Gastrocnemius medialis (tissue), 4 donors: ENCODE measurements at regions of chr3 and their contacts with region 1.

Region 1: DNA sequence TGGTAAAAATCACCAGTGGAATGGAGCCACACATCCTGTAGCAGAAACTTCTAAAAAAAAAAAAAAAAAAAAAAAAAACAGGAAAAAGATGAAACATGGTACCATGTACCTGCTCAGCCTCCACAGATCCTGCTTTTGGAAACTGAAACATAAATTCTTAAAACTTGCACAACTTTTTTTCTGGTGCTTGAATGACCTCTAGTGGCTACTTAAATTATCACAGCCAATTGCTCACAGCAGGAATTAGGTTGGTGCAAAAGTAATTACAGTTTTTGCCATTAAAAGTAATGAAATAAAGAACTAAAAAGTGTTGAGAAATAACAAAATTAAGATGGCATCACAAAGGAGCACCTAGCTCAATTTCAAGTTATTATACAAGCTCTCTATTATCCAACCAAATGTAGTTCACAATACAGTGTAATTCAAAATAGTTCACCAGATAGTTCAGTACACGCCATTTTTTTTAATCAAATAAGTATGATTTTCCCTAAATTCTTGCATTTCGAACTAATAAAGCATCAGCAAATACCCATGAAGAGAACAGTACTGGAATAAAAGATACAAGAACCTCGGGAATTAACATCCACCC is 80.6 kb downstream of the ULK4 start:
- DNase-seq: no peak
- ATAC-seq: no peak
- H3K4me3 ChIP-seq: no peak overlapping the region
- H3K27ac ChIP-seq: no peak overlapping the region
- H3K4me1 ChIP-seq: no peaks in the 10 kb centered on the region
- H3K27me3 ChIP-seq: no peaks in the 10 kb centered on the region
- CTCF ChIP-seq: peak; percentile 52 to 73 (median 67)
- POLR2A ChIP-seq: no peak

Region 2: DNA sequence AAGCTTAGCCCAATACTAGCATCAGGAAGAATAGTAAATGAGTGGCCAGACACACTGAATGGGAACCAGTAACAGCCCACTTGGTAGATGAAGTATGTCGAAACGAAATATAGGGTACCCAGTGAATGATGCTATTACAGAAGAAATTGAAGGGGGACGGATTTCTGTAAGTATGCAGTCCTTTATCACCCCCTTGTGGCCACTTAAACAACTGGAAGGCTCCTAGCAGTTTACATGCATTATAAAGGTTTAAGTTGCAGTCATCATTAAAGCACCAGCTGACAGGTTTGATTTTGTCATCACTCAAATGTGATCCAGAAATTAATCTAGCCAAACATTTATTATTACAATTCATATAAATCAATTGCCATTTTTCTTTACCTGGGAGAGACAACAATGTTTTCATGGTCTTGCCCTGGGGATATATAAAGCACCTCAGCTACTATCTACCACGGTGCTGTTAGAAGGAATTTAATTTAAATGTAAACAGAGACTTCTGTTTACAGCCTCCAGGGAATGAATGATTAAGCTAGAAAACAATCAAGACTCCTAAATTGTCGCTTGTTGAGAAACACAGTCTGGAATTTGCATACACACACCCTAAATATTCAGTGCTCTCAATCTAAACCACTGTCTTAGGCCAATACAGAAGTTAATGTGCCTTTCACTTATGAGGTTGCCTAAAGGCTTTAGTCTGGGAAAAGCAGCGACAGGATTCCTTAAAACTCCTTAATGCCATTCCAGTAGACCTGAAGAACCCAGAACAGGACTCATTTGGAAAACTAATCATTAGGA is 1564.1 kb before region 1 on chr3:
- in situ Hi-C with region 1: loop called in 1 of 4 experiments (anchors 10 kb)
- intact Hi-C with region 1: no loop called
- DNase-seq: no peak
- ATAC-seq: peak; percentile 37 to 49
- H3K4me3 ChIP-seq: no peak overlapping the region
- H3K27ac ChIP-seq: no peak overlapping the region
- H3K4me1 ChIP-seq: peaks cover 21 to 23% of the 10 kb centered on the region in 2 donors
- H3K27me3 ChIP-seq: no peaks in the 10 kb centered on the region
- CTCF ChIP-seq: peak; percentile 68 to 82 (median 75)
- POLR2A ChIP-seq: no peak

Region 3: DNA sequence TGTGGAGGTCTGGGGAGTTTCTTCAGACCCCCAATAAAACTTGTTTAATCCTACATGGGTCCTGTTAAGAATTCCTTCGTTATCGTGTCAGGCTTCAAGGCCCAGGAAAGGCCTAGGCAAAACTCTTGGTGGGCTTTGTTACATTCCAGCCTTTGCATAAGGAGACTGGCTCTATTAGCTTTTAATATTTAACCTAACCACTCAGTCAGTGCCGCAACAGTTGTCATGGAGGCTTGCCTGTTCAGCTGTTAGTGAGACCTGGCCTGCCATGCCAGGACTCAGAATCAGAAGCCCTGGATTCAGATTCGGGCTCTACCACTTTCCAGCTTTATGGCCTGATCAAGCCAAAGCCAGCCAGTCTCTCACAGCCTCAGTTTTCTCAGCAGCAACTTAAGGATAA is 1552.3 kb before region 1 on chr3:
- in situ Hi-C with region 1: loop called (anchors 5 to 25 kb)
- intact Hi-C with region 1: loop called (anchors 1 kb)
- DNase-seq: no peak
- ATAC-seq: no peak
- H3K4me3 ChIP-seq: no peak overlapping the region
- H3K27ac ChIP-seq: no peak overlapping the region
- H3K4me1 ChIP-seq: peaks cover 5 to 8% of the 10 kb centered on the region in 2 donors
- H3K27me3 ChIP-seq: no peaks in the 10 kb centered on the region
- CTCF ChIP-seq: no peak
- POLR2A ChIP-seq: no peak

Region 4: DNA sequence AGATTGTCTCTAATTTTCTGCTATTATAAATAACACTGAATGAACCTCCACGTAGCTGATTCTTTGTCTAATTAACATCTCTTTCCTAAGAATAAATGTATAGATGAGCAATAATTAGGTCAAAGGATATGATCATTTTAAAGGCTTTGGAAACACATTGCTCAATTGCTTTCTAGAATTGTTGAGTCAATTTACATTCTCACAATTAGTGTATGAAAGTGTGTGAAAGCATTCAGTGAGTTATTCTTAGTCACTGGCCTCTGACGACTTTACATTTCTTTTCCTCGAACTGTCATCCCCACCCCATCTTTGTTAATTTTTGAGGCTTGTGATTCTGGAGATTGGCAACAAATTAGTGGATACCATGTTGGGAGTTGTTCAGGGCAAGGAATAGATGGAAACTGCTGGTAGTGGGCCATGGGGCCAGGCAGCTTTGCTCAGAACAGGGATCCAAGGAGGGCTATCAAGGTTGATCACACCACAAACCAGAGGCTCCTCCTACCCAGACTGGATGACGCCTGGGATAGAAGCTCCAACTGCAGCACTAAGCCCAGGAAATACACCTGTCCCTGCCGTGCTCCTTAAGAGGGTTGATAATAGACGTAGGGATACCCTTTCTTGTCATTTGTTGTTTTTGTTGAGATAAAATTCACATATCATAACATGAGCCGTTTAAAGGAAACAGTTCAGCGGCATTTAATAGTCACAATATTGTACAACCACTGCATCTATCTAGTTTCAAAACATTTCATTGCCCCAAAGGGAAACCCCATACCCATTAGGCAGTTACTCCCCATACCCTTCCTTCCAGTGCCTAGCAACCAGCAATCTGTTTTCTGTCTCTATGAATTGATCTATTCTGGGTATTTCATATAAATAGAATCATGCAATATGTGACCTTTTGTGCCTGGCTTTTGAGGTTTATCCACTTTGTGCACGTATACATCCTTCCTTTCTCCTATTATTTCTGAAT is 1543.9 kb before region 1 on chr3:
- in situ Hi-C with region 1: loop called in 2 of 4 experiments (anchors 25 kb)
- intact Hi-C with region 1: no loop called
- DNase-seq: no peak
- ATAC-seq: no peak
- H3K4me3 ChIP-seq: no peak overlapping the region
- H3K27ac ChIP-seq: no peak overlapping the region
- H3K4me1 ChIP-seq: peaks cover 5 to 8% of the 10 kb centered on the region in 2 donors
- H3K27me3 ChIP-seq: no peaks in the 10 kb centered on the region
- CTCF ChIP-seq: no peak
- POLR2A ChIP-seq: no peak

Region 5: DNA sequence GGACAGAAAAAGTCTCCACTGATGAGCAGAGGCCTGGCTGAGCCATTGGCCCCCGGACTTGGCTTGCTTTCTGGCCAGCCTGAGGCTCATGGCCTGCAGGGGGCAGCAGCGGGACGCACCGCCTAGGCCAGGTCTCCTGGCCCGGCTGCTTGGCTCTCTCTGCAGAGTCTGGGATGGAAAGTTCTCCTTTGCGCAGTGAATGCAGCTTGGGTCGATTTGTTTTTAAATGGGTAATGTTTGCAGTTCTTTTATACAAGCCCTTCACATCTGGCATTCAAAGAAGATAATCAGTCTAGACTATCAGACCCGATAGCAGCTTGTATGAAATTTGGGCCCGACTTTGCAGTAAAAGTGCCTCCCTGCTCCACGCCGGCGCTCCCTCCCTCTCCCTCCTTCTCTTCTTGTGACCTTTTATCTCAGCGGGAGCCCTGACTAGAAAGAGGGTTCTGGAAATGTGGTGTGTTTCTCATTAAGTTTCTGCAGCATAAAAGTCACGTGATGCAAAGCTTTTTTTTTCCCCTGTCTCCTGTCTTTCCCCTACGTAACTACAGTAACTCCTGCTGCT is 1296.6 kb before region 1 on chr3:
- in situ Hi-C with region 1: loop called (anchors 5 to 10 kb)
- intact Hi-C with region 1: loop called (anchors 1 kb)
- DNase-seq: peak; percentile 57 to 62
- ATAC-seq: peak; percentile 60 to 83
- H3K4me3 ChIP-seq: no peak overlapping the region
- H3K27ac ChIP-seq: no peak overlapping the region
- H3K4me1 ChIP-seq: no peaks in the 10 kb centered on the region
- H3K27me3 ChIP-seq: no peaks in the 10 kb centered on the region
- CTCF ChIP-seq: peak; percentile 63 to 95 (median 83)
- POLR2A ChIP-seq: no peak

Region 6: DNA sequence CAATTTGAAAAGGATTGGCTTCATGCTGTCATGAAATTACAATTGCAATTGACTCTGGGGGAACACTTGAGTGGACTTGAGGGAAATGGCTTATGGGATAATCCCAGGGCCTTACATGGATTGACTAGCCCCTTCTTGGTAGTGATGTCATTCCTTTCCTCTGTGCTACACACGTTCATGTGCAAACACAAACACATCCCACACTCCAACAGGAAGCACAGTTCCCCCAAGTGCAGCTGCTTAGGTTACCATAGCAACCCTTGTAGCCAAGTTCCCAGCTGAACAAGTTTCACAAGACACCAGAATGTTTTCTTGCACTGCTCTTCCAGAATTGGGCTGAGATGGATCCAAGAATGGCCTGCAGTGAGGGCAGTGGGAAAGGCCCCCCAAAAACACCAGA is 1139.6 kb before region 1 on chr3:
- in situ Hi-C with region 1: no loop called
- intact Hi-C with region 1: loop called (anchors 10 kb)
- DNase-seq: peak; percentile 30 to 34
- ATAC-seq: peak; percentile 45 to 75
- H3K4me3 ChIP-seq: no peak overlapping the region
- H3K27ac ChIP-seq: peak overlapping the region in 1 of 4 donors; percentile 7
- H3K4me1 ChIP-seq: no peaks in the 10 kb centered on the region
- H3K27me3 ChIP-seq: no peaks in the 10 kb centered on the region
- CTCF ChIP-seq: no peak
- POLR2A ChIP-seq: no peak

Region 7: DNA sequence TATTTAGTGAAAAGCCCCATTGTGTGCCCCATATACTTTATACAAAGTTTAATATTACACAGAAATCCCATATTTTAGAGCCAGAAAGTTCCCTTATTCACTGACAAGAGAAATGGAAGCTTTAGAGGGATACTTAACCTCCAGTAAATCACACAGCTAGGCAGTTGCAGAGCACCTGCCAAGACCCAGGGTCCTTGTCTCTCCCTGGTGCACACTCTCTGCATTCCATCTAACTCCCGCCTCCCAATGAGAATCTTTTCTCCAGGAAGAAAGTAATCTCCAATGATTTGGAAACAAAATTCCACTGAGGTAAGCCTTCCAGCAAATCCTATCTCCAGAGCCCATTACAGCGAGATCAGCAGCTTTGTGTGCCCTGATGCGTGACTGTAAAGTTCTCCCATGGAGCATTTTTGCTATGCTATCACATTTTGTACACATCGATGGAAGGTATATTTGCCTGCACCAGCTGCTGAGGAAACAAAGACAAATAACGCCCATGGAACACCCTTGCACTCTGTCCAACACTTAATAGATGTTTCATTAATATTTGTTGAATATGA is 39.2 kb after region 1 on chr3:
- in situ Hi-C with region 1: no loop called
- intact Hi-C with region 1: no loop called
- DNase-seq: no peak
- ATAC-seq: no peak
- H3K4me3 ChIP-seq: no peak overlapping the region
- H3K27ac ChIP-seq: no peak overlapping the region
- H3K4me1 ChIP-seq: no peaks in the 10 kb centered on the region
- H3K27me3 ChIP-seq: no peaks in the 10 kb centered on the region
- CTCF ChIP-seq: no peak
- POLR2A ChIP-seq: no peak